ENCODE measurements at regions of chr6 and their contacts with region 1.

Region 1: GRCh38 chr6:105402939-105403935 is at the start of gene PREP:
- DNase-seq: peak; percentile 86
- H3K4me3 ChIP-seq: peak within 1 kb of the TSS; percentile 76 to 97 (median 95)
- H3K27ac ChIP-seq: peak within 1 kb of the TSS; percentile 69
- H3K4me1 ChIP-seq: peaks cover 30% of the 10 kb centered on the region
- H3K27me3 ChIP-seq: no peaks in the 10 kb centered on the region
- CTCF ChIP-seq: peak; percentile 79 to 88
- total RNA-seq, gene PREP: 55.3 to 105 TPM

Region 2: GRCh38 chr6:105097288-105097687 is 305.9 kb before region 1 on chr6:
- CTCF ChIA-PET with region 1: no interaction called
- dilution Hi-C with region 1: loop called (anchors 25 kb)
- in situ Hi-C with region 1: loop called in 1 of 2 experiments (anchors 10 kb)
- intact Hi-C with region 1: no loop called
- DNase-seq: peak; percentile 7
- H3K4me3 ChIP-seq: no peak overlapping the region
- H3K27ac ChIP-seq: no peak overlapping the region
- H3K4me1 ChIP-seq: no peaks in the 10 kb centered on the region
- H3K27me3 ChIP-seq: no peaks in the 10 kb centered on the region
- CTCF ChIP-seq: no peak

Region 3: DNA sequence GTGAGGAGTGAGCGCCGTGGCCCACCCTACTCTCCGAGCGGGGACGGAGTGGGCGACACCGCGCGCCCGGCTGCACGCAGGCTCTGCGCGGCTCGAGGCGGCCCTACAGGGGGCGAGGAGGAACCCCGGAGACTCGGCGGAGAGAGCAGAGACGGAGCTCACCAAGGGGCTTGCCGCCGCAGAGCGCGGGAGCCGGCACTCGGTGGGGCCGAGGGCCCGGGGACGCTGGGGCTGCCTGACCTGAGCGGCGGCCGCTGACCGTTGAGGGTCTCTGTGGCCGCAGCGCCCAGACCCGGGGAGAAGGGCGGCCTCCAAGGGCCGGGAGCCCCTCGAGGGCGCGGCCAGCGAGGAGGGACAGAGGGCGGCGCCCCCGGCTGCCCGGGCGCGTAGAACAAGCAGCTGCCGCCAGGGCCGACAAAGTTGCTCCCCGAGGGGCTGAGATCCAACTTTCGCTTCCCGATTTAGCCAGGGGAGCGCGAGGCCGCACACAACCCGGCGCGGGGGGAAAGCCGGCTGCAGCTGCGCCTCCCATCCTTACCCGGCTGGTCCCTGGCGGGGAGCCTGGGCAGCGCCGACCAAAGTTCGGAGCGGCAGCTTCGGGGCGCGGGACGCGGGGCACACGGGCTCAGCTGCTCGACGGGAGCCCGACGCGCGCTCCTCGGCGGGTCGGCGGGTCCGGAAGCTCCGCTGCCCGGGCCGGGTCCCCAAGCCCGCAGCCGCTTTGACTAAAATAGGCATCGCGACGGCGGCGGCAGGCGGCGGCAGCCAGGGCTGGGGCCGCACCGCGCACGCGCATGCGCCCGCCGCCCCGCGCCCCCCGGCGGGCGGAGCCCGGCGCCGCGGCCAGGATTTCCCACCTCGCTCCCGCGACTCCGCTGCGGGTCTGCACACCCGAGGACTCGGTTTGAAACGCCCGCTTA is 266.5 kb before region 1 on chr6:
- CTCF ChIA-PET with region 1: interaction called, 4 read pairs
- dilution Hi-C with region 1: no loop called
- in situ Hi-C with region 1: no loop called
- intact Hi-C with region 1: loop called (anchors 1 kb)
- DNase-seq: peak; percentile 55
- H3K4me3 ChIP-seq: peak overlapping the region; percentile 85 to 98 (median 93)
- H3K27ac ChIP-seq: peak overlapping the region; percentile 53
- H3K4me1 ChIP-seq: peaks cover 7% of the 10 kb centered on the region
- H3K27me3 ChIP-seq: no peaks in the 10 kb centered on the region
- CTCF ChIP-seq: peak; percentile 5 to 30

Region 4: DNA sequence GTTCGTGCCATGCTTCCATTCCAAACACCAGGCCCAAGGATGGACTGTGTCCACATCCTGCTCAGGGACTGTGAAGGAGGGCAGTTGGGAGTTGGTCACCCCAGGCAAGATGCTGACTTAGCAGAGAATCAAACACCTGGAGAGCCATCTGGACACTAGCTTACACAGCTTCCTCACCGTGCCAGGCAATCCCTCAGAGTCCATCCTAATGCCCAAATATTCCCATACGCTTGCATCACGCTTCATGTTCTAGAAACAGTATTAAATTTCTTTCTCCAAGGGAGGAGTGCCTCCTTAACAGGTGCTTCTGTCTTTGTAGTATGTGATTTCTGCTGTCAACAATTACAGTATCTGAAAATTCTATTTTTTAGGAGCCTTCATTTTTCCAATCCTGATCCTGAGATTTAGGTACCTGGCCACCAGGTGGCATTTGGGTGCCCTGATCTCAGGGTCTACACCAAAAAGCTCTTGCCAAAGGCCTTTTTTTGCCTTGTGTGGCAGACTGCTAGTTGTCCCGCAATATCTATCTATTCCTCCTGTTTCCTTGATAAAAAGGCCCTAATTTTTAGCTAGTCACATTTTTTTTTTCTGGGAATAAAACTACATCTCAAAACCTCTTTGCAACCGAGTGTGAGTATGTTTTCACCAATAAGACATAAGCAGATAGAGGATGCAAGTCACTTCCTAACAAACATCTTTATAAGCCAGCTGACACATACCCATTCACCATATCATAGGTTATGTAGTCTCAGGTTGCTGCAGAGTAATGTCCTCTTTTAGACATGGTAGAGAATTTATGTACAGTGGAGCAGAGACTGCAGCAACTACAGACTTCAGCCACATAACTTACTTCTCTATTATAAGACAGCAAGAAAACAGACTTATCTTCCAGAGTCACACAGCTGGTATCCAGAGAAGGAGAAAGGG is 85.4 kb before region 1 on chr6:
- CTCF ChIA-PET with region 1: interaction called, 4 read pairs
- dilution Hi-C with region 1: no loop called
- in situ Hi-C with region 1: no loop called
- intact Hi-C with region 1: loop called (anchors 1 kb)
- DNase-seq: no peak
- H3K4me3 ChIP-seq: no peak overlapping the region
- H3K27ac ChIP-seq: peak overlapping the region; percentile 45
- H3K4me1 ChIP-seq: peaks cover 29% of the 10 kb centered on the region
- H3K27me3 ChIP-seq: no peaks in the 10 kb centered on the region
- CTCF ChIP-seq: peak; percentile 36 to 62

Region 5: DNA sequence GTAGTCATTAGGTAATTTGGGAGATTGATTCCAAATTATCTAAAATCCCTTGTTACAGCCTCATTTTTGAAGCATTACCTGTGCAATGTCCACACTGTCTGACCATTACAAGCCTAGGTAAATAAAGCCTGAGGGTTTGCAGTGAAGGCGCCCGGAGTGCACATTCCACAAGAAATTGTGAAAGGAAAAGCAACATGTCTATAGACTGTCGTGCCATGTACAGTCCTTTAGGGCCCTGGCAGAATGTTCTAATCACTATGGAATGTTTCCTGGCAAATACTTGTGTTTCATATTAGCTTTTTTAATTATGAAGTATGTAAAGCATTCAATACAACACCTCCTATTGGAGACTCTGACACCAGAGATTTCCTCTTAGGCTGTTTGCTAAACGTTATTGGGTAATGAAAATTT is 29.2 kb before region 1 on chr6:
- CTCF ChIA-PET with region 1: interaction called, 15 read pairs
- dilution Hi-C with region 1: no loop called
- in situ Hi-C with region 1: no loop called
- intact Hi-C with region 1: loop called (anchors 1 kb)
- DNase-seq: peak; percentile 79
- H3K4me3 ChIP-seq: peak overlapping the region in 1 of 3 experiments; percentile 17
- H3K27ac ChIP-seq: peak overlapping the region; percentile 97
- H3K4me1 ChIP-seq: peaks cover 35% of the 10 kb centered on the region
- H3K27me3 ChIP-seq: no peaks in the 10 kb centered on the region
- CTCF ChIP-seq: peak in 1 of 2 donors; percentile 23

Region 6: GRCh38 chr6:105859457-105859856 is 456.2 kb after region 1 on chr6:
- CTCF ChIA-PET with region 1: no interaction called
- dilution Hi-C with region 1: no loop called
- in situ Hi-C with region 1: no loop called
- intact Hi-C with region 1: no loop called
- DNase-seq: no peak
- H3K4me3 ChIP-seq: no peak overlapping the region
- H3K27ac ChIP-seq: no peak overlapping the region
- H3K4me1 ChIP-seq: no peaks in the 10 kb centered on the region
- H3K27me3 ChIP-seq: no peaks in the 10 kb centered on the region
- CTCF ChIP-seq: no peak

Measured in mammary epithelial cell (primary cell).